GM12878 (cell line): ENCODE measurements at regions of chr5 and their contacts with region 1.

Region 1: DNA sequence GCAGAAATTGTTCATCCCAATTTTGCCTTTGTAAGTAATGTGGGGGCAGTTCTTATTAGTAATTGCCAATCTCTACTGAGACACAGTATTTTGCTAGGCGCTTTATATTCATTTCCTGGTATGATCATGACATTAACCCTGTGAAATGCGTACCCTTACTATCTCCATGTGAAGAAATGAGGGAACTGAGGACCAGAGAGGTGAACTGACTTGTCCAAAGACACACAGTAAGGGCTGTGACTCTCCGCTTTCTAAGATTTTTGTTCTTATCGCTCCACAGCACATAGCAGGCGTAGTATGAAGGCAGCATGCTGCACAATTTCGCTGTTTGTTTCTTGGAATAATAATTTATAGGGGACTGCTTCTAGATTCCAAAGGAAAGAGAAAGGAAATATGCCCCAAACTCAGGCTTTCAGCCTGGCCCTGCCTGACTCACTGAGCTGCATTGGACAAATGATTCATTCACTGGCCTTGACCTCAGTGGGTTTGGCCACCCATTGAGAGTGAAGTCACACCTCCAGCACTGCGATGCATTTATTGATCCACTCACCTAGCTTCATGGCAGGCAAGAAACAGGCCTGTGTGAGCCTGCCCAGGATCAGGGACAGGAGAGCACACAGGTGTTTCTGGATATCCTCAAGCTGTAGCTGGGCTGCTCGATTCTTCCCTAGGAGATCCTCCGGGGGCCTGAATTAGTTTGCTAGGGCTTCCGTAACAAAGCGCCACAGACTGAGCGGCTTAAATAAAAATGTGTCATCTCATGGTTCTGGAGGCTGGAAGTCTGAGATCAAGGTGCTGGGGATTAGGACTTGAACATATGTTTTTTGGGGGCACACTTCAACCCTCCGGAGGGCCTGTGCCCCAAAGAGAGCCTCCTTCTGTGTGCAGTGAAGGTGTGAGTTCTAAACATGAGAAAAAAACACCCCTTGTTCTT is 7.2 kb upstream of the DUSP1 start:
- DNase-seq: no peak
- ATAC-seq: peak; percentile 49
- H3K4me3 ChIP-seq: peak overlapping the region; percentile 34
- H3K27ac ChIP-seq: peak overlapping the region; percentile 93
- H3K4me1 ChIP-seq: peaks cover 21% of the 10 kb centered on the region
- H3K27me3 ChIP-seq: no peaks in the 10 kb centered on the region
- CTCF ChIP-seq: no peak
- EP300 ChIP-seq: no peak
- POLR2A ChIP-seq: no peak
- RAD21 ChIP-seq: no peak

Region 2: DNA sequence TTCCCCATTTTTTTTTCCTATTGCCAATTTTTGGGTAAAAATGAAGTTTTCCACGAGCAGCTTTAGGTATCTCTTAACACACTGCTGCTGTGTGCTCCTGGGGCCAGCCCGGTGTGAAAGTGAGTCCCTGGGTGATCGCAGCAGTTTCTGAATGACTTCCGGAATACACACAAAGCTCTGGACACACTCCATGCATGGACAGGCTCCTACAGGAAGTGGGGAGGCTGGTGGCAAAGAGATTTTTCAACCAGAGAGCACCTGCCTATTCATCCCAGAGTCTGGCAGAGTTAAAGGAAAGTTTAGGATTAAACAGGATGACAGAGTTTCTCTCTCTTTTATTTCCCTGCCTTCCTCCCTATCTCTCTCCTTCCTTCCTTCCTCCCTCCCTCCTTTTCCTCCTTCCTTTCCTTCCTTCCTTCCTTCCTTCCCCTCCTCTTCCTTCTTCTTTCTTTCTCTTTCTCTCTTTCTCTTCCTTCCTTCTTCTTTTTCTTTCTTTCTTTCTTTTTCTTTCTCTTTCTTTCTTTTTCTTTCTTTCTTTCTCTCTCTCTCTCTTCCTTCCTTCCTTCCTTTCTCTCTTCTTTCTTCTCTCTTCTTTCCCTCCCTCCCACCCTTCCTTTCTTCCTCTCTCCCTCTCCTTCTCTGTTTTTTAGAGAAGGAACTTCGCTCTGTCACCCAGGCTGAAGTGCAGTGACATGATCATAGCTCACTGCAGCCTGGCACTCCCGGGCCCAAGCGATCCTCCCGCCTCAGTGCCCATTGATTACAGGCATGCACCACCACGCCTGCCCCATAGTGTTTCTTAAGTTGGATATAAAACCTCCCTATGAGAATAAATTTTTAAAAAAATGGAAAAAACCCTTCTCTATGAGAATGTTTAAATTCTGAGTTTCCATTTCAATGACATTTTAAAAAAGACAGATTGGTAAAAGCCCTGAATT is 455.9 kb before region 1 on chr5:
- CTCF ChIA-PET with region 1: no interaction called
- POLR2A ChIA-PET with region 1: no interaction called
- RAD21 ChIA-PET with region 1: no interaction called
- SMC1A ChIA-PET with region 1: no interaction called
- in situ Hi-C with region 1: no loop called
- intact Hi-C with region 1: no loop called
- DNase-seq: no peak
- ATAC-seq: peak; percentile 90
- H3K4me3 ChIP-seq: 0 out of 2 replicates have a peak overlapping the region, but pooled peaks have one; percentile 0
- H3K27ac ChIP-seq: peak overlapping the region; percentile 89
- H3K4me1 ChIP-seq: peaks cover 38% of the 10 kb centered on the region
- H3K27me3 ChIP-seq: no peaks in the 10 kb centered on the region
- CTCF ChIP-seq: no peak
- EP300 ChIP-seq: no peak
- POLR2A ChIP-seq: peak; percentile 46; the same call in 1 of the 2 replicates
- RAD21 ChIP-seq: no peak

Region 3: DNA sequence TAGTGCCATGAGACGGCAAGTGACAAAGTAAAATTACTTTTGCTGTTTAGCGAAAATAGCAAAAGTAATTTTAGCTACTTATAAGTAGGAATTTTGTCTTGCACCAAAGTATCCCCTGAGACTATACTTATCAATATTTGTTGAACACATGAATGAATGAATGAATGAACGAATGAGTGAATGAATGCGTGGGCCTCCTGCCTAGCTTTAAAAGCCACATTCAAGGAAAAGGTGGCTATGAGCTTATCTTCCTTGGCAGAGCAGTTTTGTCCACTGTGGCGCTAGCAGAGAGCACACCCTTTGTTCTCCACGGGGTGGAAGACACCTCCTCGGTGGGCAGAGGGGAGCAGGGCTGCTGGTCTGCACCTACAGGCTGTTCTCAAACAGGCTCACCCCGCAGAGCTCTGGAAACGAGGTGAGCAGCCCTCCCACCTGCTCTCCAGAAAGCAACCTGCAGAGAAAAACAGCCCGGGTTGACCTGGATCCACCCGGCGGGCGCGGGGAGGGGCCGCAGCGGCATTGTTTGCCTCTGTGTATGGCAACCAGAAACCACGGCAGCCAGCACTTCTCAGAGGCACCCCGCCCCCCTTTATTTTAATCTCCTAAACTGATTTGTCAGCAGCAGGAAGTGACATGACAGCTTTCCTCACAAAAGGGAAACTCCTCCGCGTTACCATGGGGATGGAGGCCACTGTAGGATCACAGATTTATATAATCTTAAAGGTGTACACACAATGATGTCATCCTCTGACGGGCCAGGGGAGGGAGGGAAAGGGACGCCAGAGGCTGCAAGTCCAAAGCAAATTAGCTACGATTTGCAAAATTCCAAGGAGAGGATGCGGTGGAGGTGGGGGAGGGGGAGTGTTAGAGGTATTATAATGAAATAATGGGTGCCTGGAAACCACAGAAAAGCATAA is 13.0 kb before region 1 on chr5:
- CTCF ChIA-PET with region 1: interaction called, 15 read pairs
- POLR2A ChIA-PET with region 1: interaction called, 7 read pairs
- RAD21 ChIA-PET with region 1: interaction called, 10 read pairs
- SMC1A ChIA-PET with region 1: interaction called, 3 read pairs
- in situ Hi-C with region 1: no loop called
- intact Hi-C with region 1: no loop called
- DNase-seq: peak; percentile 83
- ATAC-seq: peak; percentile 93
- H3K4me3 ChIP-seq: peak overlapping the region; percentile 69; the same call in 1 of the 2 replicates
- H3K27ac ChIP-seq: peak overlapping the region; percentile 65
- H3K4me1 ChIP-seq: peaks cover 19% of the 10 kb centered on the region
- H3K27me3 ChIP-seq: no peaks in the 10 kb centered on the region
- CTCF ChIP-seq: no peak
- EP300 ChIP-seq: peak in 1 of 2 experiments; percentile 82; a peak in 2 of 4 replicates
- POLR2A ChIP-seq: peak; percentile 37; the same call in 1 of the 2 replicates
- RAD21 ChIP-seq: no peak

Region 4: DNA sequence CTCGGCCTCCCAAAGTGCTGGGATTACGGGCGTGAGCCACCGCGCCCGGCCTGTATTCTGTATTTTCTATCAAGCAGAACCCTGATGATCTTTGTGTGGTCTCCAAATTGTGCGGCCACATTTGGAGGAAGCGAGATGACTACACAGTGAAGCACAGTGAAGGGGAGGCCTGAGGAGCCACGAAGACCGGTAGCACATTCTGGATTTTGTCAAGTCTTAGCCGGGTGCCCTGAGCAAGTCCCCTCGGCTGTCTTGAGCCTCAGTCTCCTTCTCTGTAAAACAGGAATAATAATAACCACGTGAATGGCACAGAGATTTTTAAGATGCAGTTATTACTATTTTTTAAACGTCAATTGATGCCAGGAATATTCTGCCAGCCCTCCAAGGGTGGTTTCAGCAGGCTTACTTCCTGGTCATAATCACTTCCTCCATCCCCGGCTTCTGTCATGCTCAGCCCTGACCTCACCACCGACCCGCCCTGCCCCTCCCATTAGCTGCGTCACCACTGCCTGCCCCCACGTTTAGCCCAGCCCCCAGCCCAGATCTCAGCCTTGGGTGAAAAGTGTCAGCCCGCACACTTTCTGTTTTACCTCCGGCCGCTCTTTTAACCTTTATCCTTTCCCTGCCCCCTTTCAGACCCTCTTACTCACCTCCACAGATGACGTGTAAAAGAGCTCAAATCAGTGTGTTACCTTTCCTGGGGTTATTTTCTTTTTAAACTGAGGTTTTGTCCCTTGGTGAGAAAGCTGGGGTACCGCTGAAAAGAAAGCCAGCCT is 28.9 kb after region 1 on chr5:
- CTCF ChIA-PET with region 1: interaction called, 4 read pairs
- POLR2A ChIA-PET with region 1: interaction called, 6 read pairs
- RAD21 ChIA-PET with region 1: interaction called, 10 read pairs
- SMC1A ChIA-PET with region 1: interaction called, 13 read pairs
- in situ Hi-C with region 1: no loop called
- intact Hi-C with region 1: no loop called
- DNase-seq: peak; percentile 81
- ATAC-seq: peak; percentile 100
- H3K4me3 ChIP-seq: peak overlapping the region; percentile 62
- H3K27ac ChIP-seq: peak overlapping the region; percentile 64
- H3K4me1 ChIP-seq: peaks cover 6% of the 10 kb centered on the region
- H3K27me3 ChIP-seq: no peaks in the 10 kb centered on the region
- CTCF ChIP-seq: no peak
- EP300 ChIP-seq: no peak
- POLR2A ChIP-seq: peak; percentile 54
- RAD21 ChIP-seq: no peak

Region 5: GRCh38 chr5:172849606-172850453 is 71.7 kb after region 1 on chr5:
- CTCF ChIA-PET with region 1: interaction called, 20 read pairs
- POLR2A ChIA-PET with region 1: no interaction called
- RAD21 ChIA-PET with region 1: interaction called, 21 read pairs
- SMC1A ChIA-PET with region 1: interaction called, 12 read pairs
- in situ Hi-C with region 1: no loop called
- intact Hi-C with region 1: no loop called
- DNase-seq: peak; percentile 52
- ATAC-seq: peak; percentile 88
- H3K4me3 ChIP-seq: peak overlapping the region; percentile 21; the same call in 1 of the 2 replicates
- H3K27ac ChIP-seq: peak overlapping the region; percentile 73
- H3K4me1 ChIP-seq: peaks cover 22% of the 10 kb centered on the region
- H3K27me3 ChIP-seq: no peaks in the 10 kb centered on the region
- CTCF ChIP-seq: no peak
- EP300 ChIP-seq: no peak
- POLR2A ChIP-seq: peak; percentile 42; the same call in 1 of the 2 replicates
- RAD21 ChIP-seq: no peak